ENCODE measurements at regions of chr6 and their contacts with region 1.

Region 1: DNA sequence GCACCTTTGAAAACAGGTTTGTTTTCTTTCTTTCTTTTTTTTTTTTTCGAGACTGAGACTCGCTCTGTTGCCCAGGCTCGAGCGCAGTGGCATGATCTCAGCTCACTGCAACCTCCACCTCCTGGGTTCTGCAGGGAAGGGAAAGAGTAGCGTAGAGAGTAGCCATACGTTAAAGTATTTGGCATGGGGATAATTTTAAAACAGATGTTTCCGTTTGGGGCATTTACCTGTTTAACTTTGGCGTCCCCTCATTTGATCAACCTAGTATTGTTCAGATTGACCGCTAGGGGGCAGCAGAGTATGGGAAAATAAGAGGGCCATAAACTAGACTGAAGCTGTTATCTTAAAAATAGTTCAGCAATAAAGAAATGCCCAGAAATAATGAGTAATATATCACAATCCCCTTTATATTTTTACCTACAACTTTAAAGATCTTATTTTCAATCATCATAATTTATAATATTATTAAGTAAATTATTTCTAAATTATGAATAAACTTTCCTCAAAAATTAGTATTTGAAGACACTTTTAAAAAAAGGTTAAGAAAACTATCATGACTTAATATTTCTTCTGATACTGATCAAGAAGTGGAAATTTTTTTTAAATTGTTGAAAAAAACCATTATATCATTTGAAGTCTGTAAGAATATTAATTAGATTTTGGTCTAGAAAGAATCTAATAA is 7.6 kb upstream of the TAAR9 start:
- DNase-seq: no peak
- H3K4me3 ChIP-seq: no peak overlapping the region
- H3K27ac ChIP-seq: no peak overlapping the region
- H3K4me1 ChIP-seq: peaks cover 0 to 4% (median 2%) of the 10 kb centered on the region in 4 donors
- H3K27me3 ChIP-seq: no peaks in the 10 kb centered on the region
- CTCF ChIP-seq: peak; percentile 72 to 83 (median 76)
- EP300 ChIP-seq: no peak
- POLR2A ChIP-seq: no peak

Region 2: DNA sequence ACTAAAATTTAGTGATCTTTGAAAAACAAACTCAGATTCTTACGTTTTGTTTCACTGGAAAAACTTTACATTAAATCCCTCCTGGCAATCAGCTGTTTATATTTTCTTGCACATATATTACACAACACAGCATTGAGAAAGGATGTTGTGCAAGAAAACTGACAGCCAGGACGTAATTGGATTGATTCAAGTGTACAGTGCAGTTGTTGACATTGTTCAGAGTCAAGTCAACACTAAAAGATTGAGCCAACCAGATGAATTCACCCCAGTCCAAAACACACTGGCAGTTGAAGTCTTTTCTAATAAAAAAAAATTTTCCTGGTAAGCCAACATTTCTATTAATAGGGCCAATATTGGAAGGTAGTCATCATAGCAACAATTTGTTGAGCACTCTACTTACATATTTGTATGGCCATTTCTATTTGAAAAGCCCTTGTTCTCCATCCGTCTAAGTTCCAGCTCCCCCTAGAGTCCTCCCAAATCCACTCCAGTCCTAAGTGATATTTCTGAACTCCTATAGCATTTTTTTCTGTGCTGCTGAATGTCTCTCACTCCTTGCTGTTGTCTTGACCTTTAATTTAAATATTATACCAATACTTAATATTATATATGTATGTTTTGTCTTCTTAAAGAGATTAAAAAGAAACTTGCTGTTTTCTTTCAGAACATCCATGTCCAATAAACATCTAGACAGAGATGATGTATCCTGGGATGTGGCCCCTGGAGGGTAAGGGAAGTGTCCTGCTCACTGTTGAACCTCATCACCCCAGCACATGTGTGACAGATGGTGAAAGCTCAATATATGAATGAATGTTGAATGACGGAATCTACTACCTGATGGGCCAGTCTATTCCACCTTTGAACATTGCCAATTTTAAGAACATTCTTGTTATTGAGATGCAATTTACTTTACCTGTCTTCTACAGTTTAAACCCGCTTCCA is 204.5 kb after region 1 on chr6:
- intact Hi-C with region 1: no loop called
- DNase-seq: no peak
- H3K4me3 ChIP-seq: no peak overlapping the region
- H3K27ac ChIP-seq: no peak overlapping the region
- H3K4me1 ChIP-seq: peaks cover 0 to 24% (median 9%) of the 10 kb centered on the region in 4 donors
- H3K27me3 ChIP-seq: no peaks in the 10 kb centered on the region
- CTCF ChIP-seq: peak in 1 of 3 experiments; percentile 18
- EP300 ChIP-seq: no peak
- POLR2A ChIP-seq: no peak

Region 3: DNA sequence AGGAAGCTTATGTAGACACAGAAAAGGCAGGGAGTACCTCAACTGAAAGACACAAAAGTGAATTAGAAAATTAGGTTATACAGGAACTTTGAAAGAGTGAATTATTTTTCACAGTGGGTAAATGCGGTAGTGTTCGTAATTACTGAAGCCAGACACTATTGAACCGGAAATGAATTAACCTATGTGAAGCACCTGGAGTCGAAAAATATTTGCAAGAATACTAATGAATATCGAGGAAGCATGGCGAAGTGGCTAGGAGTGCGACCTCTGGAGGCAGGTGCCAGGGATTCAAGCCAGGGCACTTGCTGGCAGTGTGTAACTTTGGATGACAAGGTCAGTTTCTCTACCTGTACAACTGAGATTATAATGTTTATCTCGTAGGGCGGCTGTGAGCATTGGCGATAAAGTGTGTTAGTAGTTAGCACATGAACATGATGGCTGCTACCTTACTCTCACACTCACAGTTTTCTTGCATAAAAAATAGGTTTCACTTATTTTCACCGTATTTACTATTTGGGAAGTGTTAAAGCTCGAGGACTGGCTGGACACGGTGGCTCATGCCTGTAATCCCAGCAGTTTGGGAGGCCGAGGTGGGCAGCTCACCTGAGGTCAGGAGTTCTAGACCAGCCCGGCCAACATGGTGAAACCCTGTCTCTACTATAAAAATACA is 268.6 kb after region 1 on chr6:
- intact Hi-C with region 1: loop called (anchors 10 kb)
- DNase-seq: no peak
- H3K4me3 ChIP-seq: peak overlapping the region in 1 of 4 donors; percentile 73
- H3K27ac ChIP-seq: no peak overlapping the region
- H3K4me1 ChIP-seq: peaks cover 0 to 12% (median 11%) of the 10 kb centered on the region in 4 donors
- H3K27me3 ChIP-seq: no peaks in the 10 kb centered on the region
- CTCF ChIP-seq: peak; percentile 56 to 81 (median 68)
- EP300 ChIP-seq: no peak
- POLR2A ChIP-seq: no peak